MCF 10A (cell line): ENCODE measurements at regions of chr4 and their contacts with region 1.

Region 1: GRCh38 chr4:77862478-77863216 is at the start of gene MRPL1:
- DNase-seq: peak; percentile 96
- H3K4me3 Mint-ChIP-seq: peak within 1 kb of the TSS; percentile 90
- H3K27ac Mint-ChIP-seq: peak within 1 kb of the TSS; percentile 99
- H3K4me1 Mint-ChIP-seq: peaks cover 15% of the 10 kb centered on the region
- H3K27me3 Mint-ChIP-seq: no peaks in the 10 kb centered on the region
- CTCF ChIP-seq: no peak
- total RNA-seq, gene MRPL1: 36.8 and 53.3 TPM in 2 replicates

Region 2: DNA sequence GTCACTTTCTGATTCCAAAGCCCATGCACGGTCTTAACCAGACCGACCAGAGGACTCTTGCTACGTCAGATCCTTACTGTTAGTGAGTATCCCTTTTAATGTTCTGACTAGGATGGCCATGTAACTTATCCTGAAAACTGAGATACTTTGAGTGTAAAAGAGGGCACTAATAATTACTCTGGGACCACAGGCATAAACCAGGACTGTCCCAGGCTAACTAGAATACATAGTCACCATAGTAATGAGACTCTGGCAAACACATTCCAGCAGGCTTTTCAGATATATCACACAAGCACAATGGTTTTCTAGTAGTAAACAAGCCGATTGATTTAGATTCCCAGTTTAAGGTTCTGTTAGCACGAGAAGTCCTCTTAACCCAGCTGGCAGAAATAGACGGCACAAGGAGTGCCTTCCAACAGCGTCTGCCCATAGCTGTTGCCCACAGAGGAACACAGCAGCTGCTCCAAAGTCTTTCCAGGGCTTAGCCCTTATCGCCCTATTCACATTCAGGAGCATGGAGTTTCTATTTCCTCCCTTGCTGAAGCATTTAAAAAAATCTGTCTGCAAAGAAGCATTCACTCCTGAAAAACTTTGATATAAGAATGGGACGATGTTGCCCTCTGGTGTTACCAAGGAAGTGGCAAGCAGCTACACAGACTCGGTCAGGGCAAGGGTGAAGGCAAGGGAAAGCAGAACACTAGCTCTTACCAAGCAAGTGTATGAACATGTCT is 164.6 kb before region 1 on chr4:
- CTCF ChIA-PET with region 1: interaction called, 4 read pairs
- POLR2A ChIA-PET with region 1: interaction called, 5 read pairs
- intact Hi-C with region 1: loop called (anchors 5 kb)
- DNase-seq: peak; percentile 73
- H3K4me3 Mint-ChIP-seq: no peak overlapping the region
- H3K27ac Mint-ChIP-seq: no peak overlapping the region
- H3K4me1 Mint-ChIP-seq: peaks cover 23% of the 10 kb centered on the region
- H3K27me3 Mint-ChIP-seq: no peaks in the 10 kb centered on the region
- CTCF ChIP-seq: peak; percentile 65

Region 3: GRCh38 chr4:77800483-77801259 is 62.0 kb before region 1 on chr4:
- CTCF ChIA-PET with region 1: no interaction called
- POLR2A ChIA-PET with region 1: interaction called, 11 read pairs
- intact Hi-C with region 1: no loop called
- DNase-seq: no peak
- H3K4me3 Mint-ChIP-seq: no peak overlapping the region
- H3K27ac Mint-ChIP-seq: no peak overlapping the region
- H3K4me1 Mint-ChIP-seq: peaks cover 29% of the 10 kb centered on the region
- H3K27me3 Mint-ChIP-seq: no peaks in the 10 kb centered on the region
- CTCF ChIP-seq: no peak

Region 4: DNA sequence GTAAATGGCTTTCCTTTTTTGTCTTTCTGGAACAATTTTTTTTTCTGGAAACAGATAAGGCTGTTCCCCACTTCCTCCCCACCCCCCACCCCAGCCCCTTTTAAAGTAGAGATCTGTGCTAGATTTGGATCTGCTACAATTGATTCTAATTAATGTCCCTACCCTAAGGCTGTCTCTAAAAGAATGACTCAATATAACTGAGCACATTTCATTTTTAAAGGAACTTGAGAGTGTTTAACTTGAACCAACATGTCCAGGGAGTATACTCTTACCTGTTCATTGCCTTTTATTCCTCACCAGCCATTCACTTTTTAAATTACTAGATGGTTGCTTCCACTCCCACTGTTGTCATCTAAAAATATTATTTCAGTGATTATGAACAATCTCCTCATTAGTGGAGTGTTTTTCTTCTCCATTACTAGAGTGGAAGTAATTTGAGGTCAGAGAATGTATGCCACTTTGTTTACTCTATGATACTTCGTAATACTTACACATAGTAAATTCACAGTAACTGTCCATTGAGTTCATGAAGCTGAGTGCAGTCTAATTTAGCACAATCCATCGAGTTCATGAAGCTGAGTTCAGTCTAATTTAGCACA is 29.4 kb before region 1 on chr4:
- CTCF ChIA-PET with region 1: interaction called, 4 read pairs
- POLR2A ChIA-PET with region 1: interaction called, 58 read pairs
- intact Hi-C with region 1: no loop called
- DNase-seq: peak; percentile 17
- H3K4me3 Mint-ChIP-seq: no peak overlapping the region
- H3K27ac Mint-ChIP-seq: peak overlapping the region; percentile 89
- H3K4me1 Mint-ChIP-seq: peaks cover 8% of the 10 kb centered on the region
- H3K27me3 Mint-ChIP-seq: no peaks in the 10 kb centered on the region
- CTCF ChIP-seq: no peak

Region 5: DNA sequence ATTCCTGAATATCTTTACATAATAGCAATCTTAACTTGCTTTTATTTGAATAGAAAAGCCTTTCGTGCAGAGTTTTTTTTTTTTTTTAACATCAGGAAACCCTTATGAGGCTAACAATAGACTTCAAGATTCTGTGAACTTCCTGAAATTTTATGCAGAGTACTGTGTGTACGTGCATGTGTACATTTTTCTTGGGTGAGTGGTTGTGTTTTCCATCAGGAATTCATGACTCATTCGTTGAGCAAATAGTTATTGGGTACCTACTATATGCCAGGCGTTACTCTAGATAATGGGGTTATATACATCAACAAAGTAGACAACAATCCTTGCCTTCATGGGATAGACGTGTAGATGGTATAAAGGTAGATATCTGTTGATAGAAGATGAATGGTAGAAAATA is 59.1 kb after region 1 on chr4:
- CTCF ChIA-PET with region 1: no interaction called
- POLR2A ChIA-PET with region 1: interaction called, 7 read pairs
- intact Hi-C with region 1: loop called (anchors 2 kb)
- DNase-seq: peak; percentile 87
- H3K4me3 Mint-ChIP-seq: no peak overlapping the region
- H3K27ac Mint-ChIP-seq: peak overlapping the region; percentile 95
- H3K4me1 Mint-ChIP-seq: peaks cover 37% of the 10 kb centered on the region
- H3K27me3 Mint-ChIP-seq: no peaks in the 10 kb centered on the region
- CTCF ChIP-seq: no peak